ENCODE measurements at regions of chr15 and their contacts with region 1.

Region 1: GRCh38 chr15:98743177-98743576 is 94.8 kb downstream of the IGF1R start:
- DNase-seq: peak; percentile 84
- H3K4me3 ChIP-seq: no peak overlapping the region
- H3K27ac ChIP-seq: peak overlapping the region; percentile 81
- H3K4me1 ChIP-seq: peaks cover 48% of the 10 kb centered on the region
- H3K27me3 ChIP-seq: no peaks in the 10 kb centered on the region
- CTCF ChIP-seq: no peak

Region 2: GRCh38 chr15:98727115-98728085 is 15.8 kb before region 1 on chr15:
- CTCF ChIA-PET with region 1: no interaction called
- dilution Hi-C with region 1: no loop called
- in situ Hi-C with region 1: no loop called
- intact Hi-C with region 1: loop called (anchors 2 kb)
- DNase-seq: peak; percentile 95
- H3K4me3 ChIP-seq: peak overlapping the region in 1 of 3 experiments; percentile 37
- H3K27ac ChIP-seq: peak overlapping the region; percentile 98
- H3K4me1 ChIP-seq: peaks cover 39% of the 10 kb centered on the region
- H3K27me3 ChIP-seq: no peaks in the 10 kb centered on the region
- CTCF ChIP-seq: no peak

Measured in mammary epithelial cell (primary cell).